ENCODE measurements at regions of chr6 and their contacts with region 1.

Region 1: GRCh38 chr6:14066782-14067406 is 50.7 kb upstream of the CD83 start:
- DNase-seq: no peak
- ATAC-seq: peak; percentile 87
- H3K4me3 ChIP-seq: no peak overlapping the region
- H3K27ac ChIP-seq: no peak overlapping the region
- H3K4me1 ChIP-seq: peaks cover 7% of the 10 kb centered on the region
- H3K27me3 ChIP-seq: peaks cover 0 to 6% of the 10 kb centered on the region in 2 experiments; a peak in 2 of 4 replicates
- CTCF ChIP-seq: peak; percentile 48 to 76 (median 58); a peak in 5 of 6 replicates
- EP300 ChIP-seq: no peak
- POLR2A ChIP-seq: no peak
- RAD21 ChIP-seq: peak; percentile 86

Region 2: GRCh38 chr6:13873285-13874190 is 193.4 kb before region 1 on chr6:
- CTCF ChIA-PET with region 1: interaction called, 19 read pairs
- POLR2A ChIA-PET with region 1: no interaction called
- RAD21 ChIA-PET with region 1: interaction called, 10 read pairs
- SMC1A ChIA-PET with region 1: interaction called, 23 read pairs
- in situ Hi-C with region 1: no loop called
- intact Hi-C with region 1: no loop called
- DNase-seq: peak; percentile 5
- ATAC-seq: peak; percentile 87
- H3K4me3 ChIP-seq: peak overlapping the region; percentile 47; the same call in 1 of the 2 replicates
- H3K27ac ChIP-seq: no peak overlapping the region
- H3K4me1 ChIP-seq: peaks cover 5% of the 10 kb centered on the region
- H3K27me3 ChIP-seq: no peaks in the 10 kb centered on the region
- CTCF ChIP-seq: peak; percentile 72 to 80 (median 80)
- EP300 ChIP-seq: no peak
- POLR2A ChIP-seq: no peak
- RAD21 ChIP-seq: peak; percentile 67

Region 3: DNA sequence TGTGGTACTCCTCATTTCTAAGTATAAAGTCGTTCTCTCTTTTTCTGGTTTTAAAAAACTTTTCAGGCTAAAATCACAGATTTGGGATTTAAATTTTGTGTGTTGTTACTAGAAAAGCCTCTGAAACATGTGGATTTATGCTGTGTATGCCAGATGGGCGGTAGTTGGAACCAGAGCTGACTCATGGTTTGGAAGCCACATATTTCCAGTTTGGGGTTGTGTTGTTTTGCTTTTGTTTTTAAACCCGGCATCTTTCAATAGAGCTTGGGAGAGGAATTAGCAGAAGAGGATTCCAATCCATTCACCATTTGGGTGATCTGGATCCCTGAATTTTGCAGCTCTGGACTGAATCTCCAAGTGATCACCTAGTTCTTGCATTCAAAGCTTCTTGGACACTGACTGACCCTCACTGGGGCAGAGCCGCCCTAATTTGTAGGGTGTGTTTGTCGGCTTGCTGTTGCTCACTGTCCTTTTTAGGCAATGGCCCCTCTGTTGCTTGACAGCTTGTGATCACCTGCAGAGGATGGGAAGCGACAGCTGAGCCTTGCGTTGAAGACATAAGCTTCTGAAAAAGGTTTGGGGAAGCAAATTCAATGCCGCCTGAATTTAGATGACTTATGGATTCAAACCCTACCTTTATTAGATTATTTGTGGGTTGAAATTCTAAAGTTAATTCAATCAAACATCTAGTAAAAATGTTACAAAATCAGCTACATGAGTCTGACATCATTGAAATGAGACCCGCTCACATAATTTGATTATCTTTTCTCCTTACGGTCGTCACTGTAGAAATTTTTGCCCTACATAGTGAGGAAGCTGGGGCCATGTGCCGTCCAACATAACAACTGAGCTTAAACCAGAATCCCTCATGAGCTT is 29.3 kb before region 1 on chr6:
- CTCF ChIA-PET with region 1: interaction called, 19 read pairs
- POLR2A ChIA-PET with region 1: no interaction called
- RAD21 ChIA-PET with region 1: interaction called, 6 read pairs
- SMC1A ChIA-PET with region 1: interaction called, 3 read pairs
- in situ Hi-C with region 1: no loop called
- intact Hi-C with region 1: no loop called
- DNase-seq: no peak
- ATAC-seq: peak; percentile 16; the same call in 1 of the 3 replicates
- H3K4me3 ChIP-seq: no peak overlapping the region
- H3K27ac ChIP-seq: no peak overlapping the region
- H3K4me1 ChIP-seq: peaks cover 14% of the 10 kb centered on the region
- H3K27me3 ChIP-seq: no peaks in the 10 kb centered on the region; a peak in 1 of 4 replicates
- CTCF ChIP-seq: no peak
- EP300 ChIP-seq: no peak
- POLR2A ChIP-seq: no peak
- RAD21 ChIP-seq: no peak

Region 4: DNA sequence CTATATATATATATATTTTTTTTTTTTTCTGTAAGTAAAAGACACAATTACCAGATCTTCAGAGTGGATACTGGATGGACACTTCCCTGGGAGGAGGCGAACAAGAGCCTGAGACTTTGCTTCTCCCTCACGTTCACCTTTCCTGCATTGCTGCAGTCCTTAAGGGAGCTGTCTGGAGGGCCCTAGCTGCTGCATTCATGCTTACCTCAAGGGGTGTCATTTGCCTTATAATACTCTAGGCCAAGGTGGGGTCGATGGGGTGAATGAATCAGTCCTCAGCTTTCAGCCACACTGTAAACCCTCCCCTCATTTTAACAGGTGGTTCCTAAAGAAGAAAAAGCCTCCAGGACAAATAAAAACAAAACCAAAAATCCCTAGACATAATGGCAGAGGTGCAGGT is 15.9 kb after region 1 on chr6:
- CTCF ChIA-PET with region 1: interaction called, 66 read pairs
- POLR2A ChIA-PET with region 1: interaction called, 3 read pairs
- RAD21 ChIA-PET with region 1: interaction called, 13 read pairs
- SMC1A ChIA-PET with region 1: interaction called, 226 read pairs
- in situ Hi-C with region 1: no loop called
- intact Hi-C with region 1: no loop called
- DNase-seq: no peak
- ATAC-seq: no peak
- H3K4me3 ChIP-seq: no peak overlapping the region
- H3K27ac ChIP-seq: no peak overlapping the region
- H3K4me1 ChIP-seq: peaks cover 12% of the 10 kb centered on the region
- H3K27me3 ChIP-seq: no peaks in the 10 kb centered on the region
- CTCF ChIP-seq: no peak
- EP300 ChIP-seq: no peak
- POLR2A ChIP-seq: no peak
- RAD21 ChIP-seq: no peak

Region 5: DNA sequence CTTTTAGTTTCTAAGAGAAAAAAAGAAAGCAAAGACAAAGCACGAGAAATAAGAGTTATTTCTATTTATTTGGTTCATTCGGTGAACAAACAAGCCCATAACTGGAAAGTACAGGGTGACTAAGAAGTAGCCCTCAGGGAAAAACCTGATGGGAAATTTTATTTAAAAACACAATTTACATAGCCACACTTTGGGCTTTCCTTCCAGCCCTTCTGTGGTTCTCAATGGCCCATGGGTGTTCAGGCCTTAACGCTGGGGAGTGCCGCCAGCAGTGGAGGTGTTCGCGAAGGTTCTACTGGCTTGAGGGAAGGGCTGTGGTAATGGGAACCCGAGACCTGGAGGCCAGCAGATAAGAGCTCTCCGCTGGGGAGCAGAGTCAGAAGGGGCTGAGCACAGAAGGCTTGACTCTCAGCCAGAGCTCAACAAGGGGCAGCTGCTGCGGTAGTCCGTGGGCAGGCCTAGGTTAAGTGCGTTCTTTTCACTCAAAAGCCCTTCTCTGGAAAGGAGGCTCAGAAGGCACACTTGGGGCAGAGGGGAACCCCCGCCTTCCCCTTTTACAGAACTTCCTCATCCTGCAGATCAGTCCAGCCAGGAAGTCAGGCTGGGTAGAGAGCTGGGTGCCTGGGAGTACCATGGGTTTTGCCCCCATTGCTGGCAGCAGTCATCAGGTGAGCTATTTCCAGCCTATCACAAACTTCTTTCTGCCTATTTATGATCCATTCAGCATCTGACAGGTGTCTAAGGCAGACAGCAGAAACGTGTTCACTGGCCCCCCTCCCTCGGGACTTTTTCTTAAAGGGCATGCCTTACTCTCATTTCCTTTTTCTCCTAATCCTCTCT is 41.9 kb after region 1 on chr6:
- CTCF ChIA-PET with region 1: interaction called, 39 read pairs
- POLR2A ChIA-PET with region 1: interaction called, 56 read pairs
- RAD21 ChIA-PET with region 1: interaction called, 24 read pairs
- SMC1A ChIA-PET with region 1: interaction called, 66 read pairs
- in situ Hi-C with region 1: no loop called
- intact Hi-C with region 1: no loop called
- DNase-seq: peak; percentile 97
- ATAC-seq: peak; percentile 82
- H3K4me3 ChIP-seq: peak overlapping the region; percentile 32; the same call in 1 of the 2 replicates
- H3K27ac ChIP-seq: peak overlapping the region; percentile 85
- H3K4me1 ChIP-seq: peaks cover 43% of the 10 kb centered on the region
- H3K27me3 ChIP-seq: no peaks in the 10 kb centered on the region
- CTCF ChIP-seq: no peak
- EP300 ChIP-seq: peak; percentile 46 to 66; a peak in 3 of 4 replicates
- POLR2A ChIP-seq: peak; percentile 59
- RAD21 ChIP-seq: no peak

Region 6: GRCh38 chr6:14129575-14129974 is 62.7 kb after region 1 on chr6:
- CTCF ChIA-PET with region 1: interaction called, 86 read pairs
- POLR2A ChIA-PET with region 1: interaction called, 5 read pairs
- RAD21 ChIA-PET with region 1: interaction called, 55 read pairs
- SMC1A ChIA-PET with region 1: interaction called, 33 read pairs
- in situ Hi-C with region 1: no loop called
- intact Hi-C with region 1: no loop called
- DNase-seq: no peak
- ATAC-seq: peak; percentile 47
- H3K4me3 ChIP-seq: no peak overlapping the region
- H3K27ac ChIP-seq: no peak overlapping the region
- H3K4me1 ChIP-seq: peaks cover 6% of the 10 kb centered on the region
- H3K27me3 ChIP-seq: no peaks in the 10 kb centered on the region
- CTCF ChIP-seq: peak; percentile 41 to 72 (median 56)
- EP300 ChIP-seq: no peak
- POLR2A ChIP-seq: no peak
- RAD21 ChIP-seq: peak; percentile 67